MCF 10A (cell line): ENCODE measurements at regions of chr2 and their contacts with region 1.

Region 1: DNA sequence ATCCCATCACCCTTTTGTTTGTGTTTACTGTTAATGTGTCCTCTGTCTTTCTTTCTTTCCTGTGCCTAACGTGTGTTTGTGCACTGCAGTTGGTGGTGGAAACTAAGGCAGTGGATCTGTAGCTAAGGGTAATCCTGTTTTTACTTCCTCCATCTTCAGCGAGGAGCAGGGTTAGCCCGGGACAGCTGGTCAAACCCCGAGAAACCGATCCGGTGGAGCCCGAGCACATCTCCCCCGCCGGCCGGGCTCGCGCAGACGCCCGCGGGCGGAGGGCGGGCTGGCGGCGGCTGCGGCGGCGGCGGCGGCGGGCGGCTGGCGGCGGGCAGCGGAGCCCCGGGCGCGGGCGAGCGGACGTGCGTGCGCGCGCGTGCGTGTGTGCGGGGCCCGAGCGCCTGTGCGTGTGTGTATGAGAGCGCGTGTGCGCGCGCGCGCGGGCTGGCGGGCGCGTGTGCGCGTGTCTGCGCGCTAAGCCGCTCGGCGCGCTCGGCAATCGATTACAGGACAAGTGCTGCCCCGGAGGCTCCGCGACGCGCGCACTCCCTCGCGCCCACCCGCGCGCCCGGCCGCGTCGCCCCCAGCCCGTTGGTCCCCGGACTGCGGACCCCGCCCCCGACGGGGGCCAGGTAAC is at the start of gene IKZF2:
- DNase-seq: peak; percentile 77
- H3K4me3 Mint-ChIP-seq: peak within 1 kb of the TSS; percentile 86
- H3K27ac Mint-ChIP-seq: peak within 1 kb of the TSS; percentile 91
- H3K4me1 Mint-ChIP-seq: peaks cover 18% of the 10 kb centered on the region
- H3K27me3 Mint-ChIP-seq: no peaks in the 10 kb centered on the region
- CTCF ChIP-seq: no peak
- total RNA-seq, gene IKZF2: 6.0 and 8.8 TPM in 2 replicates

Region 2: GRCh38 chr2:212595037-212595654 is 556.4 kb before region 1 on chr2:
- CTCF ChIA-PET with region 1: interaction called, 4 read pairs
- POLR2A ChIA-PET with region 1: interaction called, 4 read pairs
- intact Hi-C with region 1: loop called (anchors 1 kb)
- DNase-seq: peak; percentile 49
- H3K4me3 Mint-ChIP-seq: no peak overlapping the region
- H3K27ac Mint-ChIP-seq: no peak overlapping the region
- H3K4me1 Mint-ChIP-seq: peaks cover 7% of the 10 kb centered on the region
- H3K27me3 Mint-ChIP-seq: no peaks in the 10 kb centered on the region
- CTCF ChIP-seq: peak; percentile 48

Region 3: GRCh38 chr2:212845941-212846340 is 305.6 kb before region 1 on chr2:
- CTCF ChIA-PET with region 1: interaction called, 6 read pairs
- POLR2A ChIA-PET with region 1: interaction called, 8 read pairs
- intact Hi-C with region 1: loop called (anchors 5 kb)
- DNase-seq: peak; percentile 31
- H3K4me3 Mint-ChIP-seq: peak overlapping the region; percentile 38
- H3K27ac Mint-ChIP-seq: peak overlapping the region; percentile 87
- H3K4me1 Mint-ChIP-seq: peaks cover 36% of the 10 kb centered on the region
- H3K27me3 Mint-ChIP-seq: no peaks in the 10 kb centered on the region
- CTCF ChIP-seq: no peak

Region 4: GRCh38 chr2:212905640-212906220 is 245.8 kb before region 1 on chr2:
- CTCF ChIA-PET with region 1: interaction called, 4 read pairs
- POLR2A ChIA-PET with region 1: interaction called, 6 read pairs
- intact Hi-C with region 1: loop called (anchors 2 kb)
- DNase-seq: peak; percentile 78
- H3K4me3 Mint-ChIP-seq: peak overlapping the region; percentile 54
- H3K27ac Mint-ChIP-seq: peak overlapping the region; percentile 96
- H3K4me1 Mint-ChIP-seq: peaks cover 32% of the 10 kb centered on the region
- H3K27me3 Mint-ChIP-seq: no peaks in the 10 kb centered on the region
- CTCF ChIP-seq: no peak

Region 5: DNA sequence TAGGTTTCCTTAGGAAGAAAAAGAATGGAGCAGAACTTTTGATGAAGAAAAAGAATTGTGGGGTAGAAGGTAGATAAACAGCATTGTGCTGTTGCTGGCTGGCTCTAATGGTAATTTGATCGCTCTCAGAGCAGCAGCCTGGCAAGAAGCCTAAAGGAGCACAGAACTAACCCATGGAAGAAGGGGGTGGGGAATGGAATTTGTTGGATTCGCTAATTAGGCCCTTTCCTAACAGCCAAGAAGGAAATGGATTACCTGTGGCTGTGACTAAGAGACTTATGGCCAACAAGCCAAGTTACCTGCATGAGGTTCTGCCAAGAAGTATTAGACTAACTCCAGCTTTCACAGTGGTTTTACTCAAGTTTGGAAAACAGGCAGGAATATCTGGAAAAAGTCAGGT is 210.7 kb before region 1 on chr2:
- CTCF ChIA-PET with region 1: interaction called, 3 read pairs
- POLR2A ChIA-PET with region 1: interaction called, 23 read pairs
- intact Hi-C with region 1: no loop called
- DNase-seq: peak; percentile 96
- H3K4me3 Mint-ChIP-seq: peak overlapping the region; percentile 11
- H3K27ac Mint-ChIP-seq: peak overlapping the region; percentile 68
- H3K4me1 Mint-ChIP-seq: peaks cover 16% of the 10 kb centered on the region
- H3K27me3 Mint-ChIP-seq: no peaks in the 10 kb centered on the region
- CTCF ChIP-seq: no peak

Region 6: DNA sequence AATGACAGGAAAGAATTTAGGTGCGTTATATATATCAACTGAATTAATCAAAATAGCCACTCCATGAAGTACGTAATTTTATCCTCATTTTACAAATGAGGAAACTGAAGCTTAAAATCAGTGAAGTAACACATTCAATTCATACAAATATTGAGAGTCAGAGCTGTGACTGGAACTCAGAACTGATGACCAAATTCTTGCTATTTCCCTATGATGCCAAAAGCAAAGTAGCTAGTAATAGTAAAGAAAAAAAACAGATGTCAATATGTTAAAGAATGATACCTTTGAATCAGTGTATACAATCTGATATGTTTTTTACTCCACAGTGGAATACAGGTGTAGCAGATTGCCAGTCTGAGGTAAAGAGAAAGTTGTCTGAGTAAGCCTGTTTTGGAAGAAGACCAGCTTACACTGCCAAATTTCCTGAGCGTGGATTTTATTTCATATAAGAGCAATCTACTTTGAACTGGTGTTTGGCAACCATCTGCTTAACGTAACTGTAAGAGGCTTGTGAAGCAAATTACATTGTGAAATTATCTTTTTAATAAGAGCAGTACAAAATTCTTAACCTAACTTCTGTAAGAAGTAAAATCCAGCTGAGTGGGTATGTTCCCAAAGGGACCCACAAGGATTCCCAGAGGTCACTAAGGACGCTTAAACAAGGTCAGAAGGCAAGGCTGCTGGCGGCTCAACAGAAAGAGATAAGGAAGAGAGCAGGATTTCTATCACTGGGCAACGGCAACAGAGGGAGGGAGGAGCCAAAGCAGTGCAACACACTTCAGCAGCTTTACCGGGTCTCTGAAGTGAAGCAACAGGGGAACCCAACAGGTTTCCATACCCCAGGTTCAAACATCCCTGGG is 85.7 kb before region 1 on chr2:
- CTCF ChIA-PET with region 1: interaction called, 4 read pairs
- POLR2A ChIA-PET with region 1: interaction called, 19 read pairs
- intact Hi-C with region 1: loop called (anchors 5 kb)
- DNase-seq: peak; percentile 67
- H3K4me3 Mint-ChIP-seq: peak overlapping the region; percentile 79
- H3K27ac Mint-ChIP-seq: peak overlapping the region; percentile 86
- H3K4me1 Mint-ChIP-seq: peaks cover 40% of the 10 kb centered on the region
- H3K27me3 Mint-ChIP-seq: no peaks in the 10 kb centered on the region
- CTCF ChIP-seq: no peak